ENCODE measurements at regions of chr12 and their contacts with region 1.

Region 1: GRCh38 chr12:53098982-53099651 is 1.6 kb downstream of the IGFBP6 start:
- DNase-seq: peak; percentile 89
- ATAC-seq: peak; percentile 71
- H3K4me3 ChIP-seq: peak overlapping the region; percentile 58 to 78
- H3K27ac ChIP-seq: peak overlapping the region; percentile 98
- H3K4me1 ChIP-seq: peaks cover 45 to 76% of the 10 kb centered on the region in 2 experiments
- H3K27me3 ChIP-seq: no peaks in the 10 kb centered on the region
- CTCF ChIP-seq: peak in 2 of 3 experiments; percentile 82 to 93; a peak in 4 of 6 replicates
- POLR2A ChIP-seq: no peak
- RAD21 ChIP-seq: no peak

Region 2: GRCh38 chr12:53054112-53054833 is 44.8 kb before region 1 on chr12:
- CTCF ChIA-PET with region 1: interaction called, 16 read pairs
- POLR2A ChIA-PET with region 1: interaction called, 6 read pairs
- RAD21 ChIA-PET with region 1: interaction called in 1 of 2 experiments, 3 read pairs
- intact Hi-C with region 1: no loop called
- DNase-seq: peak; percentile 94
- ATAC-seq: peak; percentile 81
- H3K4me3 ChIP-seq: peak overlapping the region; percentile 71 to 81
- H3K27ac ChIP-seq: peak overlapping the region; percentile 92
- H3K4me1 ChIP-seq: peaks cover 42 to 58% of the 10 kb centered on the region in 2 experiments
- H3K27me3 ChIP-seq: no peaks in the 10 kb centered on the region
- CTCF ChIP-seq: no peak
- POLR2A ChIP-seq: peak; percentile 56
- RAD21 ChIP-seq: no peak

Region 3: DNA sequence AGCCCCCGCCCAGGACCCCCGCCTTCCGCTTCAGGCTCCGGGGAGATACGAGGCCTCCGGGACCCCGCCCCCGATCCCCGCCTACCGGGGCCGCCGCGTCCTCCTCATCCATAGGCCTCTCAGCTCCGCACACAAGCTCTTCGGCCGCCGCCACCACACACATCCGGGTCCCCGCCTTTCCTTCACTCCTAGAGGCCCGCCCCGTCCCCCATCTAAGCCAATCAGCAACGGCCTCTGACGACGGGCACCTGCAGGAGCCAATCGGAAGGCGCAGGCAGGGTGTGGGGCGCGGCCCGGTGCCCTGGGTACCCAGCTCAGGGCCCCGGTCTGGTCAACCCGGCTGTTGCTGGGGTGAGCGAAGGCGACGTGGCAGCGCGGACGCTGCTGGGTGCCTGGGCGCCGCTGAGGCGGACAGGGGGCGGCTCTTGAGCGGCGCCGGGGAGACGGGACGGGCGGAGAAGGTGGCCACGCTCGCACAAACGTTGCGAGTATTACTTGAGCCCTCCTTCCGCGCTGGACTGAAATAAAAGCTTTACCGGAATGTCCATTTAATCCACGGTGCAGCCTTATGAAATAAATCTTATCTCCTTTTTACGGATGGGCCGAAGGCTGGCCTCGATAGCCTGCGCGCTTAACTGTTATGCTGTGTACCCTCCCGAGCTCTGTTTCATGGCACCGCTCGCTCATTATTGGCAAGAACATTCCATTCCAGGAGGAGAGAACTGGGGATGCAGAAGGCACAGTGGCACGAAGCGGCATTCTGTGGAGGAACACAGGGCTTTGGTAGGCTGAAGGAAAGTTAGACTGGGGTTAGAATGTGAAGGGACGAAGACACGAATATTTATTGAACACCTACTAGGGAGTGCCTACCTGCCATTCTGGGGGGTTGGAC is 19.6 kb before region 1 on chr12 and contains the start of gene SPRYD3:
- CTCF ChIA-PET with region 1: interaction called, 24 read pairs
- POLR2A ChIA-PET with region 1: interaction called, 27 read pairs
- RAD21 ChIA-PET with region 1: interaction called, 5 to 6 read pairs
- intact Hi-C with region 1: loop called (anchors 1 kb)
- DNase-seq: peak; percentile 89
- ATAC-seq: peak; percentile 98
- H3K4me3 ChIP-seq: peak within 1 kb of the TSS; percentile 67 to 81
- H3K27ac ChIP-seq: peak within 1 kb of the TSS; percentile 72
- H3K4me1 ChIP-seq: peaks cover 9 to 25% of the 10 kb centered on the region in 2 experiments
- H3K27me3 ChIP-seq: no peaks in the 10 kb centered on the region
- CTCF ChIP-seq: no peak
- POLR2A ChIP-seq: peak; percentile 83
- RAD21 ChIP-seq: no peak
- total RNA-seq, gene SPRYD3: 47.5 TPM